ENCODE measurements at regions of chr2 and their contacts with region 1.

Region 1: DNA sequence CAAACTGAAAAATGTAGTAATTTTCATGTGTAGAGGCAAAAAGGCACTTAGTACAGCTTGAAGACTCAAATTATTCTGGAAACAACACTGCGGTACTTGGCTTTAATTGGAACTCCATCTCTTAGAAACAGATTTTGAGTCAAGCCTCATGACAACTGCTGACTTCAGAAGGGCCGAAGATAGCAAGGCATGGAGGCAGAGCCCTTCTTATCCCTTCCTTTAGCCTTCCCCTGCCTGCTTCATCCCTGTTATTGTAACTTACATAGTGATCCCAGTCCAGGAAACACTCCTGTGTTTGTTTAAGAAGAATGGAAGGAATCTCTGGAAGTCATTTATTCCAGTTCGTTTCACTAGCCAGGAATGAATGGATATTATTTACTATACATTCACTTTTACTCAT is 110.9 kb upstream of the FAM98A start:
- DNase-seq: peak; percentile 30
- ATAC-seq: peak; percentile 91
- H3K4me3 ChIP-seq: no peak overlapping the region
- H3K27ac ChIP-seq: peak overlapping the region; percentile 96; the same call in 1 of the 2 replicates
- H3K4me1 ChIP-seq: peaks cover 1% of the 10 kb centered on the region; the same call in 1 of the 2 replicates
- H3K27me3 ChIP-seq: no peaks in the 10 kb centered on the region
- CTCF ChIP-seq: no peak
- POLR2A ChIP-seq: no peak
- RAD21 ChIP-seq: no peak

Region 2: DNA sequence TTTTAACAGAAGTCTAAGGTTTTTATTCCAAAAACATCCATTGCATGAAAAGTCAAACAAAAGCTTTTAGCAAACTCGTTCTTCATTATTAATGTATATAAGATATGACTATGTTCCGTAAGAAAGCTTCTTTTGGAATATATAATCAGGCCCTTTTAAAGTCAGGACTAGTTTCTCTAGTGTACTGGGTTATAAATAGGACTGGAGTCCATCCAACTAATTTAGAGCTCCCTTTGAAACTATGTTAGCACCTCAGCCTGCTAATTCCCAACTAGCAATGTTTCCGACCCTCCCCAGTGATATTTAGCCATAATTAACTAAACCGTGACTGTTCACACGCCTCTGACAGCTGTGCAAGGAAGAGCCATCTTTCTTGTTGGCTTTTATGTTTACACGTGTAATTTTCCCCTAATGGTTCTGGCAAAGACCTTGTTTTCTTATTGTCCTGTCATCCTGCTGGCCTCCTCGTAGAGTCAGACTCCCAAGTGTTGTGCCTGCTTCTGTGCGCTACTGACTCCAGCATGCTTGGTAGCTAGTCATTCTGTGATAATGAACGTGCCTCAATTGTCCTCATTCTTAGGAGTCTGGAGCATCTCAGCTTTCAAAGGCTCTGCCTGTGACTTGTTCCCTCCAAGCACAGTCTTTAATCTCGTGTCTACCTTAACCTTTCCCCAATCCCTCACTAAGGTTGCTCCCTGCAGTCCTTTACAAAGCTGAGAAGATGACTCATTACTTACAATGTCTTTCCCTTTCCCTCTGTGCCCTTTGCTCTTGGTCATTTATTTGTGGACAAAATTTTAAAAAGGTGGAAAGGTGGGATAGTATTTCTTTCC is 405.7 kb before region 1 on chr2:
- CTCF ChIA-PET with region 1: no interaction called
- POLR2A ChIA-PET with region 1: no interaction called
- dilution Hi-C with region 1: no loop called
- in situ Hi-C with region 1: no loop called
- intact Hi-C with region 1: no loop called
- DNase-seq: no peak
- ATAC-seq: no peak
- H3K4me3 ChIP-seq: no peak overlapping the region
- H3K27ac ChIP-seq: no peak overlapping the region
- H3K4me1 ChIP-seq: 0 out of 2 replicates have a peak, but pooled peaks cover 1% of the 10 kb centered on the region
- H3K27me3 ChIP-seq: no peaks in the 10 kb centered on the region
- CTCF ChIP-seq: no peak
- POLR2A ChIP-seq: no peak
- RAD21 ChIP-seq: no peak

Region 3: GRCh38 chr2:33785201-33786106 is 75.5 kb after region 1 on chr2:
- CTCF ChIA-PET with region 1: no interaction called
- POLR2A ChIA-PET with region 1: no interaction called
- dilution Hi-C with region 1: no loop called
- in situ Hi-C with region 1: no loop called
- intact Hi-C with region 1: loop called (anchors 5 kb)
- DNase-seq: peak; percentile 10
- ATAC-seq: peak; percentile 33; the same call in 1 of the 2 replicates
- H3K4me3 ChIP-seq: no peak overlapping the region
- H3K27ac ChIP-seq: no peak overlapping the region
- H3K4me1 ChIP-seq: no peaks in the 10 kb centered on the region
- H3K27me3 ChIP-seq: no peaks in the 10 kb centered on the region
- CTCF ChIP-seq: no peak
- POLR2A ChIP-seq: no peak
- RAD21 ChIP-seq: no peak